Heart left ventricle (tissue), 16 donors: ENCODE measurements at regions of chr16 and their contacts with region 1.

Region 1: GRCh38 chr16:25628766-25629165 is 63.0 kb upstream of the HS3ST4 start:
- DNase-seq: no peak
- ATAC-seq: no peak
- H3K4me3 ChIP-seq: no peak overlapping the region
- H3K27ac ChIP-seq: no peak overlapping the region
- H3K4me1 ChIP-seq: no peaks in the 10 kb centered on the region
- H3K27me3 ChIP-seq: peaks cover 0 to 2% (median 0%) of the 10 kb centered on the region in 9 donors
- CTCF ChIP-seq: no peak
- POLR2A ChIP-seq: no peak

Region 2: GRCh38 chr16:25340973-25341372 is 287.8 kb before region 1 on chr16:
- intact Hi-C with region 1: no loop called
- DNase-seq: no peak
- ATAC-seq: no peak
- H3K4me3 ChIP-seq: no peak overlapping the region
- H3K27ac ChIP-seq: no peak overlapping the region
- H3K4me1 ChIP-seq: no peaks in the 10 kb centered on the region
- H3K27me3 ChIP-seq: peaks cover 0 to 5% (median 0%) of the 10 kb centered on the region in 9 donors
- CTCF ChIP-seq: no peak
- POLR2A ChIP-seq: no peak

Region 3: DNA sequence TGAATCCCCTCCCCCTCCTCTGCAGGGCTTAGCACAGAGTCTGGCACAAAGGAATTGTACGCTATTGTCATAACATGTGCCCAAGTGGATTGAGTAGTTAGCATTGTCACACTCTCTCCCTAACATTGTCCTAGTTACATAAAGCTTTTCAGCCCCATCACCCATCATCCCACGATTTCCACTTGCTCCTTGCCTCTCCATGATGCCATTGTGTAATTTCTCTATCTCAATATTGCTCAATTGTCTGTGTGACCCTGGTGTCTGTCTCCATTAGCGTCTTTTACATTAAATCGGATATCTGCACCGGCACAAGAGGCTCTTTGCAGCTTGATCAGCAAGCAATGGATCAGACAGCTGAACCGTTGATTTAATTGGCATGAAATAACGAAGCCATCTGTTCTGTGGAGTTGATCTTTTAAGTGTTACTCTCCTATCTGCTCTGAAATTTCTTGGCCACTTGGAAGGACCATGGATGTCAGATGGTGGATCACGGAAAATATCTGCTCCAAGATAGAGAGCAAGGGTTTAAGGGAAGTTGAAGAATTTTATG is 14.0 kb before region 1 on chr16:
- intact Hi-C with region 1: loop called in 1 of 10 experiments (anchors 1 kb)
- DNase-seq: no peak
- ATAC-seq: no peak
- H3K4me3 ChIP-seq: no peak overlapping the region
- H3K27ac ChIP-seq: no peak overlapping the region
- H3K4me1 ChIP-seq: no peaks in the 10 kb centered on the region
- H3K27me3 ChIP-seq: peaks cover 0 to 6% (median 0%) of the 10 kb centered on the region in 9 donors
- CTCF ChIP-seq: no peak
- POLR2A ChIP-seq: no peak

Region 4: GRCh38 chr16:25656639-25657038 is 27.9 kb after region 1 on chr16:
- intact Hi-C with region 1: no loop called
- DNase-seq: no peak
- ATAC-seq: no peak
- H3K4me3 ChIP-seq: no peak overlapping the region
- H3K27ac ChIP-seq: no peak overlapping the region
- H3K4me1 ChIP-seq: no peaks in the 10 kb centered on the region
- H3K27me3 ChIP-seq: no peaks in the 10 kb centered on the region
- CTCF ChIP-seq: no peak
- POLR2A ChIP-seq: no peak

Region 5: GRCh38 chr16:25699069-25699468 is 70.3 kb after region 1 on chr16:
- intact Hi-C with region 1: no loop called
- DNase-seq: no peak
- ATAC-seq: no peak
- H3K4me3 ChIP-seq: no peak overlapping the region
- H3K27ac ChIP-seq: no peak overlapping the region
- H3K4me1 ChIP-seq: no peaks in the 10 kb centered on the region
- H3K27me3 ChIP-seq: peaks cover 0 to 62% (median 23%) of the 10 kb centered on the region in 9 donors
- CTCF ChIP-seq: no peak
- POLR2A ChIP-seq: no peak